Activated T-helper 1 cell treated with anti-CD3 and anti-CD28 coated beads, Interleukin-12 subunit alpha, Interleukin-12 subunit beta, Interleukin-2, Interleukin-4 antibody, amounts not matched to agents 30 ng/mL and 10 ng/mL and 1 ng/mL, durations not matched to agents 14 hours and 24 hours and 36 hours (primary cell): ENCODE measurements at regions of chr1 and their contacts with region 1.

Region 1: DNA sequence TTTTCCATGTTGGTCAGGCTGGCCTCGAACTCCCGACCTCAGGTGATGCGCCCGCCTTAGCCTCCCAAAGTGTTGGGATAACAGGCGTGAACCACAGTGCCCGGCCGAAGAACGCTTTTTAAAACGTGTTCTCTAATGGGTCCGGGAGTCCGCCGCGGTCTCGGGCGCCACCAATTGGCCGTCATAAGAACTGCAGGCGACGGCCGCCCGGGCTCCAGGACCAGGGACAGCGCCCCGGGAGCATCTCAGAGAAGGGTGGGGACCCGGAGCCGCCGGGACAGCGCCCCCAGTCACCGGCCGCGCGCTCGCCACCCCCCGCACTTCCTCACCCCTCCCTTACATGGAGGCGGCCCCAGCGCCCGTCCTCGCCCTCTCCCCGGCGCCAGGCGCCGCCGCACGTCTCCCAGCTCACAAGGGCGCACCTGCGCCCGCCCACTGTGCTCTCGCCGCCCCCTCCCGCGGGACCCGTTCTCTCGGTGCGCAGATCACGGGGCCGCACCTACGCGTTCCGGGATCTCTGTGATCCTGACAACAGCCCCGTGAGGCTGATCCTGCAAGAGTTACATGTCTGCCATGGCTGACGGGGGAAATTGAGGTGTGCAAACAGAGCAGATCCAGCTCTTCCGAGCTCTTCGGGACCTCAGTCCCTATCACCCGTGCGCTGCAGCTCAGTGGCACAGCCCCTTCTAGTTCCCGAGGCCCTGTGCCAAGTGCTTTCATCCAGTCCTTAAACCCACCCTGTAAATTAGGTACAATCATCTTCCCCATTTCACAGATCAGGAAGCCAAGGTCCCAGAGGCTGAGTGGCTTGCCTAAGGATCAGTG is 9.8 kb downstream of the RAP1GAP start:
- DNase-seq: peak; percentile 73
- H3K4me3 Mint-ChIP-seq: peak overlapping the region; percentile 30
- H3K27ac Mint-ChIP-seq: no peak overlapping the region
- H3K4me1 Mint-ChIP-seq: no peaks in the 10 kb centered on the region
- H3K27me3 Mint-ChIP-seq: peaks cover 34% of the 10 kb centered on the region

Region 2: GRCh38 chr1:21232044-21232443 is 427.3 kb before region 1 on chr1:
- intact Hi-C with region 1: loop called (anchors 10 kb)
- DNase-seq: no peak
- H3K4me3 Mint-ChIP-seq: no peak overlapping the region
- H3K27ac Mint-ChIP-seq: peak overlapping the region; percentile 40
- H3K4me1 Mint-ChIP-seq: no peaks in the 10 kb centered on the region
- H3K27me3 Mint-ChIP-seq: no peaks in the 10 kb centered on the region

Region 3: GRCh38 chr1:21378705-21379494 is 280.4 kb before region 1 on chr1:
- intact Hi-C with region 1: loop called (anchors 10 kb)
- DNase-seq: no peak
- H3K4me3 Mint-ChIP-seq: no peak overlapping the region
- H3K27ac Mint-ChIP-seq: no peak overlapping the region
- H3K4me1 Mint-ChIP-seq: no peaks in the 10 kb centered on the region
- H3K27me3 Mint-ChIP-seq: peaks cover 3% of the 10 kb centered on the region

Region 4: GRCh38 chr1:21508580-21509350 is 150.5 kb before region 1 on chr1:
- intact Hi-C with region 1: loop called (anchors 1 kb)
- DNase-seq: peak; percentile 51
- H3K4me3 Mint-ChIP-seq: peak overlapping the region; percentile 60
- H3K27ac Mint-ChIP-seq: peak overlapping the region; percentile 5
- H3K4me1 Mint-ChIP-seq: peaks cover 6% of the 10 kb centered on the region
- H3K27me3 Mint-ChIP-seq: peaks cover 45% of the 10 kb centered on the region

Region 5: DNA sequence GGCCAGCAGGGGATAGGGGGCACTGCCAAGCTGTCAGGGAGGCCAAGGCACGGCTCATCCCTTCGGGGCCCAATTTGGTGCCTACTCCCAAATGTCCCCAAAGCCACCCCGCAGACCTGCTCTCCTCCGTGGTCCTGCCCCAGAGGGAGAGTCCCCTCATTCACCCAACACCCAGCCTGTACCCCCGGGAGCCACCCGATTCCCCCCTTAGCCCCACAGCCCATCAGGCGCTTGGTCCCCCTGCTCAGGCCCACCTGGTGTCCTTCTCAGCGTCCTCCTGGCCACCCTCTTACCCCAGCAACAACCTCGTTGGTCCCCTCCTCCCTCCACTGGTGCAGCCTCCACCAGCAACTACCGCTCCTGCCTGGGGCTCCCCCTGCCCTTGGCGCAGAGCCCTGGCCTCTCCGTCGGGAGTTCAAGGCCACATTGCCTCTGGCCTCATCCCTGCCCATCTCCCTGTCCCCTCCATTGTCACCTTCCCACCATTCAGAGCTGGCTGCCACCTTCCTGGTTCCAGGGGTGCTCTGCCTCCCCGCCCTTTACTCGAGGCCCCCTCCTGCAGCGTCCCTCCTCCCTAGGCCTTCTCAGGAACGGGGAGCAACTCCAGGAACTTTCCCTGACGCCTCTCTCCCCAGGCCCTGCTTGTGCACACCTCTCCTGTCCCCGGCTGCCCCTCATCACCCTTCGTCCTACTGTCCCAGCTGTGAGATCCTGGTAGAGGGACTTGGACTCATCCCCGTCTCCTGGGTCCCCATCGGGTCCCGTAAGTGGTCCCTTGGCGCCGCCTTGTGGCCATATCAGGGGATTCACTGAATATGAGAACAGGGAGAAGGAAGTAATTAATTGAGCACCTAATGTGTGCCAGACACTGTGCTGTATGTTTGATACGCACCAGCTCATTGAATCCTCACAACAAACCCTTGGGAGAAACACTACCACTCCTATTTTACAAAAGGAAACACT is 64.1 kb before region 1 on chr1:
- intact Hi-C with region 1: no loop called
- DNase-seq: peak; percentile 25
- H3K4me3 Mint-ChIP-seq: no peak overlapping the region
- H3K27ac Mint-ChIP-seq: no peak overlapping the region
- H3K4me1 Mint-ChIP-seq: no peaks in the 10 kb centered on the region
- H3K27me3 Mint-ChIP-seq: peaks cover 6% of the 10 kb centered on the region

Region 6: GRCh38 chr1:21647431-21648351 is 11.6 kb before region 1 on chr1:
- intact Hi-C with region 1: loop called (anchors 1 kb)
- DNase-seq: no peak
- H3K4me3 Mint-ChIP-seq: no peak overlapping the region
- H3K27ac Mint-ChIP-seq: no peak overlapping the region
- H3K4me1 Mint-ChIP-seq: peaks cover 13% of the 10 kb centered on the region
- H3K27me3 Mint-ChIP-seq: peaks cover 25% of the 10 kb centered on the region

Region 7: GRCh38 chr1:21801100-21801499 is 141.8 kb after region 1 on chr1:
- intact Hi-C with region 1: no loop called
- DNase-seq: no peak
- H3K4me3 Mint-ChIP-seq: no peak overlapping the region
- H3K27ac Mint-ChIP-seq: no peak overlapping the region
- H3K4me1 Mint-ChIP-seq: no peaks in the 10 kb centered on the region
- H3K27me3 Mint-ChIP-seq: peaks cover 8% of the 10 kb centered on the region

Region 8: DNA sequence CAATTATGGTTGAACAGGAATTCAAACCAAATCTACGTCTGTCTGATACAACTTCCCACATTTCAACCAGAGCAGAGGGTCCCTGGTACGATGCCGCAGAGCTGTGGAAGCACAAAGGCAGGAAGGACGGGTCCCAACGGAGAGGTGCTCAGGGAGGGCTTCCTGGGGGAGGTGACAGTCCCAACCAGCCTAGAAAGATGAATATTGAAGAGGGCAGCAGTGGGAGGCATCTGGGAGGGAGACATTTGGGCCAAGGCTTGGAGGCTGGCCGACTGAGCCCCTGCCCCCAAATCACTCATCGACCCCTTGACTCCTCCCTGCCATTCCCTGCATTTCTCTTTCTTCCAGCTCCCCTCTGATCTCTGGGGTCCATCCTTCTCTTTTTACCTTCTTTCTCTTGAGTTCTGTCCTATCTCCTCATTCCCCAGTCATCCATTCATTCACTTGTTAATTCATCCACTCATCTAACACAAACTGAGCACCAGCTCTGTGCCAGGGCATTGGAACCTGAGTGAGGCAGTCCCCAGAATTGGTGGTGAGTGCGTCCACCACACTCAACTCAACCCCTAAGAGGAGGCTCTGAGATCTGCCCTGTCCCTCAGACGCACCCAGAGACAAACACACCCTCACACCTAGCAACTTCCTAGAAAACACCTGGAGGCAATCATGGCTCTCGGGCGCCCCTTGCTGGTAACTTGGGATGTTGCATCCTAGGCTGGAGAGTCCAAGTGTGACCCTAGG is 304.3 kb after region 1 on chr1:
- intact Hi-C with region 1: loop called (anchors 10 kb)
- DNase-seq: peak; percentile 70
- H3K4me3 Mint-ChIP-seq: no peak overlapping the region
- H3K27ac Mint-ChIP-seq: peak overlapping the region; percentile 1
- H3K4me1 Mint-ChIP-seq: peaks cover 5% of the 10 kb centered on the region
- H3K27me3 Mint-ChIP-seq: peaks cover 3% of the 10 kb centered on the region